ENCODE measurements at regions of chr3 and their contacts with region 1.

Region 1: GRCh38 chr3:108489771-108490170 is 20.6 kb downstream of the MYH15 start:
- DNase-seq: no peak
- H3K4me3 ChIP-seq: no peak overlapping the region
- H3K27ac ChIP-seq: no peak overlapping the region
- H3K4me1 ChIP-seq: peaks cover 0 to 13% (median 0%) of the 10 kb centered on the region in 3 donors
- H3K27me3 ChIP-seq: no peaks in the 10 kb centered on the region
- CTCF ChIP-seq: peak; percentile 46 to 80 (median 72)
- POLR2A ChIP-seq: no peak

Region 2: DNA sequence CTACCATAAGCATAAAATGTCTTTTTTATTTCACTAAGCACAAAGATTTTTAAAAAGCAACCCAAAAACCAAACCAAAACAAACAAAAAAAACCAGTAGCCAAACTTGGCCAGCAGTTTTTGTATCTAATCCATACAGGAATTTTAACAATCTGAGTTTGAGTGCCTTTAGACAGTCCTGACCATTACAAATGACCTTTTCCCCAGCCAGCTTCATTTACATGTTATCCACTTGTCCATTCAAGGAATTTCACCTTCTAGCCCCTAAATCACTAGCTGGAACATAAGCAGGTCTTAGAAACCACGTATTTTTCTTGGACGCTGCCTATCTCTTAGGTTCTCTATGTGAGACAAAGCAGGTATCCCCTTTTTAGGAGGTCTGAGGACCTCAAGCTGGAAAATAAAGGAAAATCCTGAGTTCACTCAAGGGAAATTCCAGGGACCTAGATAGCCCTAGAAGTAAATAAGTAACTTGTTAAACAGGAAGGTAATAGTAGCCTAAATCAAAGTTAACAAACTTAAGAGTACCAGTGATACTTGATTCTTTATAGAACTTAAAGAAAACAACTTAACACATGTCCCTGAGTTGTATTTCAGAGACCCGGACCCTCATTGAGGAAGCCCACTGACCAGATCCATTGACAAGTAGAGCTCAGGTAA is 65.3 kb after region 1 on chr3:
- intact Hi-C with region 1: loop called (anchors 5 kb)
- DNase-seq: no peak
- H3K4me3 ChIP-seq: no peak overlapping the region
- H3K27ac ChIP-seq: no peak overlapping the region
- H3K4me1 ChIP-seq: no peaks in the 10 kb centered on the region
- H3K27me3 ChIP-seq: no peaks in the 10 kb centered on the region
- CTCF ChIP-seq: no peak
- POLR2A ChIP-seq: no peak